ENCODE measurements at regions of chr18 and their contacts with region 1.

Region 1: GRCh38 chr18:53698907-53699306 is 525.6 kb downstream of the MBD2 start:
- DNase-seq: no peak
- ATAC-seq: no peak
- H3K4me3 ChIP-seq: no peak overlapping the region
- H3K27ac ChIP-seq: no peak overlapping the region
- H3K4me1 ChIP-seq: no peaks in the 10 kb centered on the region
- H3K27me3 ChIP-seq: no peaks in the 10 kb centered on the region
- CTCF ChIP-seq: peak; percentile 35

Region 2: GRCh38 chr18:53544917-53545316 is 154.0 kb before region 1 on chr18:
- intact Hi-C with region 1: no loop called
- DNase-seq: no peak
- ATAC-seq: no peak
- H3K4me3 ChIP-seq: no peak overlapping the region
- H3K27ac ChIP-seq: no peak overlapping the region
- H3K4me1 ChIP-seq: no peaks in the 10 kb centered on the region
- H3K27me3 ChIP-seq: no peaks in the 10 kb centered on the region
- CTCF ChIP-seq: no peak

Region 3: DNA sequence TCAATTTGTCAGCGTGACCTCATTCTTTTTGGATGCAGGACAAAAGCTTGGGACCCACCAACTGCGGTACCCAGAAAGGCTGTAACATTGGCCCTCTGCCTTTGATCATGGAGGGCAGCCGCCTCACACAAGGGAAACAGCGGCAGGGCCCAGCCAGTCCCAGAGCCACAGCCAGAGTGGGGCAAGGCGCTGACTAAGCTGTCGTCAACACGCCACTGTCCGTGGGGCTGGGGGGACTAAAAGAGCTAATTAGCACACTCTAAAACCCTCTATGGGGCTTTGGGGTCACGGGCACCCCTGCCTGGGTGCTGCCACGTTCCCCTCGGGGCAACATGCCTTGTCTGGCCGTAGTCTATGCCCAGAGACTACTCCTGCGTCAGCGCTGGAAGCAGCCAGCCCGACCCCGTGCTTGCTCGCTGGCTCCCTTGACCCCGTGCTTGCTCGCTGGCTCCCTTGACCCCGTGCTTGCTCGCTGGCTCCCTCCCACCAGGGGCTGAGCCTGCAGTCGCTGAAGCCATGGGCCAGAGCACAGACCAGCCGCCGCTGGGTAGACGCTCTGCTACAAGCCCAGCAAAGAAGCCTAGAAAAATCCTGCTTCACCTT is 72.8 kb before region 1 on chr18:
- intact Hi-C with region 1: no loop called
- DNase-seq: no peak
- ATAC-seq: no peak
- H3K4me3 ChIP-seq: no peak overlapping the region
- H3K27ac ChIP-seq: no peak overlapping the region
- H3K4me1 ChIP-seq: no peaks in the 10 kb centered on the region
- H3K27me3 ChIP-seq: no peaks in the 10 kb centered on the region
- CTCF ChIP-seq: no peak

Region 4: DNA sequence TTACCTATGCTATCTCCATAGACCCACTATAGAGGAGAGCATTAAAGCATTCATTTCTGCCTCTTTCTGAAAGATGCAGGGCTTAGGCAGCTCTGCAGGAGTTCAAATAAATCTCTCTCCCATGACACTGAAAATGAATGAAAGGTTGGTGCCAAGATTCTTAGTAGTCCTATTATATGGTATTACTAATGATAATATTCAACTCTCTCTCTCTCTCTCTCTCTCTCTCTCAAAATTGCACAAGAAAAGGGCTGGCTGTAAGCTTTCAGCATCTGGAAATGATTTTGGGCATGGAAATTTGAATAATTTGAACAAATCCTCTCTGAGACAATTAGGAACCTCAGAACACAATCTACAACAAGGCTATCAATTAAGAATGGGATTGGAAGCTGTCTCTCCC is 91.9 kb after region 1 on chr18:
- intact Hi-C with region 1: no loop called
- DNase-seq: no peak
- ATAC-seq: no peak
- H3K4me3 ChIP-seq: no peak overlapping the region
- H3K27ac ChIP-seq: no peak overlapping the region
- H3K4me1 ChIP-seq: no peaks in the 10 kb centered on the region
- H3K27me3 ChIP-seq: no peaks in the 10 kb centered on the region
- CTCF ChIP-seq: no peak

Region 5: GRCh38 chr18:54127759-54128378 is 429.0 kb after region 1 on chr18:
- intact Hi-C with region 1: loop called in 1 of 2 experiments (anchors 5 kb)
- DNase-seq: no peak
- ATAC-seq: no peak
- H3K4me3 ChIP-seq: no peak overlapping the region
- H3K27ac ChIP-seq: no peak overlapping the region
- H3K4me1 ChIP-seq: no peaks in the 10 kb centered on the region
- H3K27me3 ChIP-seq: no peaks in the 10 kb centered on the region
- CTCF ChIP-seq: peak; percentile 33

Measured in psoas muscle (tissue), 8 donors.